ENCODE measurements at regions of chr11 and their contacts with region 1.

Region 1: DNA sequence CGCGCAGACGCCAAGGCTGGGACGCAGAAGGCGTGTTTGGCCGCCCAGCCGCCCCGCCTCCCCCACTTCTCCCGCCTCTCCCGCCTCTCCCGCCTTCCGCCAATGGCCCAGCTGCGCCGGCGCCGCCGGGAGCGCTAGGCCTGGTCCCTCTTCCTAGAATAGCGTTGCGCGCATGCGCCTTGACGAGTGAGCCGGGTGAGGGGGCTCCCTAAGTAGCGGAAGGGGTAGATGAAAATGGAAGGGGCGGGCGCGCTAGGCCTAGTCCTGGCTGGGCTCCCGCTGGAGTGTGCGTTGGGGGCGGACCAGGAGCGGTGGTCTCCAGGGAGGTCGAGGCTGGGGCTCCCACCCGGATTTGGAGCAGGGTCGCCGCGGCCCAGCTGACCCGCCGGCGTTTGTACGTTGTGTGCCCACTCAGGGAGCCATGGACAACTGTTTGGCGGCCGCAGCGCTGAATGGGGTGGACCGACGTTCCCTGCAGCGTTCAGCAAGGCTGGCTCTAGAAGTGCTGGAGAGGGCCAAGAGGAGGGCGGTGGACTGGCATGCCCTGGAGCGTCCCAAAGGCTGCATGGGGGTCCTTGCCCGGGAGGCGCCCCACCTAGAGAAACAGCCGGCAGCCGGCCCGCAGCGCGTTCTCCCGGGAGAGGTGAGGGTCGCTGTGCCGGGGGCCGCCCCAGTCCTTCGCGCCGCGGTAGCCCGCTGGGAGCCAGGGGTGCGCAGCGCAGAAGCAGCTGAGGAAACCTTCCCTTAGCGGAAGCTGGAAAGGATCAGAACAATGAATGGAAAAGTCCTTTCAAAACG is at the start of gene AKIP1:
- DNase-seq: peak; percentile 92 to 93
- ATAC-seq: peak; percentile 92 to 93
- H3K4me3 ChIP-seq: peak within 1 kb of the TSS; percentile 87
- H3K27ac ChIP-seq: peak within 1 kb of the TSS; percentile 98
- H3K4me1 ChIP-seq: peaks cover 42% of the 10 kb centered on the region
- CTCF ChIP-seq: no peak
- EP300 ChIP-seq: no peak
- POLR2A ChIP-seq: peak; percentile 77
- RAD21 ChIP-seq: no peak
- polyA plus RNA-seq, gene AKIP1: 61.3 and 66.7 TPM in 2 replicates

Region 2: DNA sequence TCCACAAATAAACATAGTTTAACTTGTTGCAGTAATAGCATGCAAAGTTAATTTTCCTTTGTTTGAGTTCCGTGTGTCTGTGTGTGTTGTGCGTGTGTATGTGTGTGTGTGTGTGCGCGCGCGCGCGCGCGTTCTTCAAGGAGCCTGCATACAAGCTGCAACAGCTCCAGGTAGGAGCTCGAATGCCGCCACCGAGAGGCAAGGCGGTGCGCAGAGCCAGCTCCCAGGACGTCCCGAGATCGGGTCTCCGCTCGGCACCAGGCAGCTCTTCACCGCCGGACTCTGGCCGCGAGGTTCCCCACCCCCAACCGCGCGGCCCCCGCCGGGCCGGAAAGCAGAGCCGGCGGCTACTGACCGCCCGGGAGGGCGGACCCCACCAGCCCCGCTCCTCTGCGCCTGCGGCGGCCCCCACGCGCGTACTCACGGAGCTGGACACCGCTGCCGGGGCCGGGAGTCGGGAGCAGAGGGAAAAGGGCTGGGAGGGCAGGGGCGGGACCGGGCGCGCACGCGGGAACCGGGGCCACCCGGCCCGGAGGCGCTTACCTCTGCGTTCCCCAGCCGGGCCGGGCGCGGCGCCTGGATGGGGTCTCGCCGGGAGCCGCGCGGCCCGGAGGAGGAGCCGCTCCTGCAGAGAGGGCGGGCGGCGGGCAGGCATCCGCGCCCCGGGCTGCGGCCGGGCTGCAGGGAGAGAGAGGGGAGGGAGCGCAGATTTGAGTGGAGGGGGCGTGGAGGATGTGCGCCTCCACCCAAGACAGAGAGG is 40.6 kb before region 1 on chr11:
- CTCF ChIA-PET with region 1: interaction called, 6 read pairs
- POLR2A ChIA-PET with region 1: interaction called, 22 read pairs
- DNase-seq: peak; percentile 58 to 86
- ATAC-seq: peak; percentile 83 to 89
- H3K4me3 ChIP-seq: peak overlapping the region; percentile 94
- H3K27ac ChIP-seq: peak overlapping the region; percentile 95 to 96
- H3K4me1 ChIP-seq: peaks cover 14% of the 10 kb centered on the region; the same call in 2 of the 3 replicates
- CTCF ChIP-seq: no peak; the same call in 2 of the 3 replicates
- EP300 ChIP-seq: no peak
- POLR2A ChIP-seq: peak; percentile 38
- RAD21 ChIP-seq: peak; percentile 10 to 51; a peak in 2 of 5 replicates

Region 3: GRCh38 chr11:8886322-8886721 is 24.9 kb before region 1 on chr11:
- CTCF ChIA-PET with region 1: no interaction called
- POLR2A ChIA-PET with region 1: no interaction called
- DNase-seq: no peak
- ATAC-seq: no peak
- H3K4me3 ChIP-seq: no peak overlapping the region
- H3K27ac ChIP-seq: no peak overlapping the region
- H3K4me1 ChIP-seq: peaks cover 5% of the 10 kb centered on the region; the same call in 1 of the 3 replicates
- CTCF ChIP-seq: no peak
- EP300 ChIP-seq: no peak
- POLR2A ChIP-seq: no peak
- RAD21 ChIP-seq: no peak

Region 4: GRCh38 chr11:8928981-8929565 is 17.8 kb after region 1 on chr11:
- CTCF ChIA-PET with region 1: interaction called, 26 read pairs
- POLR2A ChIA-PET with region 1: no interaction called
- DNase-seq: no peak
- ATAC-seq: no peak
- H3K4me3 ChIP-seq: no peak overlapping the region
- H3K27ac ChIP-seq: no peak overlapping the region
- H3K4me1 ChIP-seq: no peaks in the 10 kb centered on the region
- CTCF ChIP-seq: no peak
- EP300 ChIP-seq: no peak
- POLR2A ChIP-seq: no peak
- RAD21 ChIP-seq: no peak

Region 5: GRCh38 chr11:8948886-8949285 is 37.7 kb after region 1 on chr11:
- CTCF ChIA-PET with region 1: interaction called, 28 read pairs
- POLR2A ChIA-PET with region 1: interaction called, 4 read pairs
- DNase-seq: no peak
- ATAC-seq: no peak
- H3K4me3 ChIP-seq: no peak overlapping the region
- H3K27ac ChIP-seq: no peak overlapping the region
- H3K4me1 ChIP-seq: no peaks in the 10 kb centered on the region
- CTCF ChIP-seq: no peak
- EP300 ChIP-seq: no peak
- POLR2A ChIP-seq: no peak
- RAD21 ChIP-seq: no peak